Activated CD4-positive, alpha-beta T cell treated with anti-CD3 and anti-CD28 coated beads, Interleukin-2, amount 10 ng/mL, durations not matched to agents 24 days and 14 days (primary cell): ENCODE measurements at regions of chr1 and their contacts with region 1.

Region 1: DNA sequence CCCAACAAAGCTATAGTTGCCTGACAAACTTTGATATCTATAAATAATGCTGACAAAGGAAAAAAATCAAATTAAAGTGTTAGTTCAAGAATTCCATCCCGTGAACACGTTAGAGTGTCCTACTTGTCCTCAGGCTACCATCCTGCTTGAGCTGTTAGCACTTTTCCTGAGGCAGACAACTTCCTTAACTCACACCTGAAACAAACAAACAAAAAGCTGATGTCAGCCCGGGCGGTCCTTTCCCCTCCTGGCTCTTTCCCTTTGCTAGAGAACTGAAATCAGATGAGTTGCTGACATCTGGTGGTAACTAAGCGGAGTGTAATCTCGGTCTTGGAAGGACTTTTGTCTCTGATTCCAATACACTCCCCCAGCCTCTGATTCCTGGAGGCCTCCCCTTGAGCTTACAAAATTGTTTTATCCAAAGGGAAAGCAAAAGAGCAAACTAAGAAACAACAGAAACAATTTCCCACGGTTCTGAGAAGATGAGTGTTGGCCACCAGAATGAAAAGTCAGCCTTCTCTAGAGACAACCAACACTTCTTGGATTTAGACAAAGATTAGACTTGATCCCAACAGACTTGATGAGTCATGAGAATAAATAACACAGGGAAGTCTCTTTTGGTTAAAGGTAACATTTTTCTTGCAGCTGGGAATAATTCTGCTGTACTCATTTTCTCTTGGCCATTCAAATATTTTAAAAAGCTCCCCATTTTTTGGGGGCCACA is 135.4 kb downstream of the PROX1 start:
- DNase-seq: peak; percentile 61
- H3K4me3 Mint-ChIP-seq: no peak overlapping the region
- H3K27ac Mint-ChIP-seq: no peak overlapping the region
- H3K4me1 Mint-ChIP-seq: no peaks in the 10 kb centered on the region
- H3K27me3 Mint-ChIP-seq: no peaks in the 10 kb centered on the region

Region 2: GRCh38 chr1:213374369-213374768 is 748.9 kb before region 1 on chr1:
- intact Hi-C with region 1: loop called (anchors 5 kb)
- DNase-seq: peak; percentile 85
- H3K4me3 Mint-ChIP-seq: no peak overlapping the region
- H3K27ac Mint-ChIP-seq: no peak overlapping the region
- H3K4me1 Mint-ChIP-seq: no peaks in the 10 kb centered on the region
- H3K27me3 Mint-ChIP-seq: peaks cover 7% of the 10 kb centered on the region